Activated CD4-positive, alpha-beta T cell treated with anti-CD3 and anti-CD28 coated beads, Interleukin-2, amount 10 ng/mL, durations not matched to agents 24 days and 14 days (primary cell): ENCODE measurements at regions of chr2 and their contacts with region 1.

Region 1: DNA sequence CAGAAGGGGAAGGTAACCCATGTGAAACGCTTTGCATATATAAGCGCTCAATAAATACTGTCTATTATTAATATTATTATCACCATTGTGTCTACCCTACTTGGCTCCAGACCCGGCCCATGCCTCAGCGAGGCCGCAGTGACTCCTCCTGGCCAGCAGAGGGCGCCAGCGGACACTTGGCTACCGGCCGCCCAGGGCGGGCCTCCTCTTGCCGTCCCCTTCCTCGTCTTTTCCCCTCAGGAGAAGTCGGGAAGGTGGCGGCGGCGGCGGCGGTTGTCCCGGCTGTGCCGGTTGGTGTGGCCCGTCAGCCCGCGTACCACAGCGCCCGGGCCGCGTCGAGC is at the start of gene AGFG1:
- DNase-seq: peak; percentile 96
- H3K4me3 Mint-ChIP-seq: peak within 1 kb of the TSS; percentile 93
- H3K27ac Mint-ChIP-seq: peak within 1 kb of the TSS; percentile 84
- H3K4me1 Mint-ChIP-seq: peaks cover 41% of the 10 kb centered on the region
- H3K27me3 Mint-ChIP-seq: no peaks in the 10 kb centered on the region
- total RNA-seq, gene AGFG1: 221 and 229 TPM in 2 replicates

Region 2: DNA sequence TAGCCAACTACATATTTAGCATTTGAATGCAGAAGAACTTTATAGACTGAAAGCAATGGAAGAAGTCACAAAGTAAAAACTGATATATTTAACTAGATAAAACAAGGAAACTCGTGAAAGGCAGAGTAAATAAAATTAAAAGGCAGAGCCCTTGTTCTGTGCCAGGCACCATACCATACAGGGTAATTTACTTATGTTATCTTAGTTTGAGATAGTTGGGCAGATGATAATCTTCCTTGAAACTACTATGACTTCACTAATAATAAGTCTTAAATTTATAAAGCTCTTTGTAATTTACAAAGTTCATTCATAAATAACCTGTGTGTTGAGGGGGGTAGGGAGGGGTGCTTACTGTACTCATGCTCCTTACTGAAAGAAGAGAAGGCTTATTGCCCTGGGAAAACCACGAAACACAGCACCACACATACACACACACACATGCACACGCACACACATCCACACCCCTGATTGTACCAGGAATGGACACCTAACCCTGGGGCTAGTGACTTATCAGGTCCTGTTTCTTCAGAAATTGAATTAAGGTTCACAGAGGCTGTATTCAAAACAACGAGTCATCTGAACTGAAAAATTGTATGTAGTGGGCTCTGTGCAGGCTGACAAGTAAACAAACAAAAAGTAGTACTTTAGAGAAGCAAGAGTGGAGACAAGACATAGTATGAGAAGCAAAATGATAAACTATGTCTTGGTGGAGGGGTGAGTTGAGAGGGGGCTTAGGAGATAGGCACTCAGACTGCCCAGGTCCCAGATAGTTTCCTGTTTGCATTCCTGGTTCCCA is 38.1 kb after region 1 on chr2:
- intact Hi-C with region 1: loop called (anchors 5 kb)
- DNase-seq: no peak
- H3K4me3 Mint-ChIP-seq: no peak overlapping the region
- H3K27ac Mint-ChIP-seq: no peak overlapping the region
- H3K4me1 Mint-ChIP-seq: peaks cover 42% of the 10 kb centered on the region
- H3K27me3 Mint-ChIP-seq: no peaks in the 10 kb centered on the region

Region 3: DNA sequence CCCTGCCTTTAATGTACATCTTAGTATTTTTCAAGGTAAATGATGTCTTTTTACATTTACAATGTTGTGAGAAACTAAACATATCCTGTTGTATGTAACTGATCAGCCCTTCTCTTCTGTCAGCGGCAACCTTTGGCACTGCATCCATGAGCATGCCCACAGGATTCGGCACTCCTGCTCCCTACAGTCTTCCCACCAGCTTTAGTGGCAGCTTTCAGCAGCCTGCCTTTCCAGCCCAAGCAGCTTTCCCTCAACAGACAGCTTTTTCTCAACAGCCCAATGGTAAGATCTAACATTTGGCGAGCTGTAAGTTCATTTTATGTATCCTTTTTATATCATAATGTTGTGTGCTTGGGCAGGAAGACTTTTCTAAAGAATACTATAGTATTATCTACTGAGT is 79.9 kb after region 1 on chr2:
- intact Hi-C with region 1: loop called (anchors 5 kb)
- DNase-seq: no peak
- H3K4me3 Mint-ChIP-seq: no peak overlapping the region
- H3K27ac Mint-ChIP-seq: no peak overlapping the region
- H3K4me1 Mint-ChIP-seq: no peaks in the 10 kb centered on the region
- H3K27me3 Mint-ChIP-seq: no peaks in the 10 kb centered on the region

Region 4: GRCh38 chr2:227706859-227707258 is 235.0 kb after region 1 on chr2:
- intact Hi-C with region 1: no loop called
- DNase-seq: no peak
- H3K4me3 Mint-ChIP-seq: no peak overlapping the region
- H3K27ac Mint-ChIP-seq: no peak overlapping the region
- H3K4me1 Mint-ChIP-seq: no peaks in the 10 kb centered on the region
- H3K27me3 Mint-ChIP-seq: no peaks in the 10 kb centered on the region